MCF 10A (cell line): ENCODE measurements at regions of chr9 and their contacts with region 1.

Region 1: DNA sequence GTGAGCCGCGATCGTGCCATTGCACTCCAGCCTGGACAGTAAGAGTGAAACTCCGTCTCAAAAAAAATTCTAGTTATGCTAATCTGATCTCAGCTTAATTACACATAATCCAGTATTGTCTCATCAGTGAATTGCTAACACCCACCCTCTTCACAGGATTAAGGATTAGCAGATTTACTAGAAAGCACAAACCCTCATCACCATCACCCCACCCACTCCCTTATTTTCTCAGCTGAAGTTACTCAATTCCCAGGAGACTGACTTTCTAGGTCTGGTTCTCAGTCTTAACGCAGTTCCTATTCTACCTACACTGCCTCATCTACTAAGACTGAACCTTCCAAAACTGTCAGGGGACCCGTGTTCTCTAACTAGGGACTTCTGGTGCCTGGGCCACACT is 9.0 kb downstream of the TOR1B start:
- DNase-seq: no peak
- H3K4me3 Mint-ChIP-seq: no peak overlapping the region
- H3K27ac Mint-ChIP-seq: no peak overlapping the region
- H3K4me1 Mint-ChIP-seq: no peaks in the 10 kb centered on the region
- H3K27me3 Mint-ChIP-seq: no peaks in the 10 kb centered on the region
- CTCF ChIP-seq: no peak

Region 2: GRCh38 chr9:129481824-129482511 is 330.0 kb before region 1 on chr9:
- CTCF ChIA-PET with region 1: no interaction called
- POLR2A ChIA-PET with region 1: no interaction called
- intact Hi-C with region 1: no loop called
- DNase-seq: peak; percentile 38
- H3K4me3 Mint-ChIP-seq: peak overlapping the region; percentile 70
- H3K27ac Mint-ChIP-seq: peak overlapping the region; percentile 93
- H3K4me1 Mint-ChIP-seq: peaks cover 39% of the 10 kb centered on the region
- H3K27me3 Mint-ChIP-seq: no peaks in the 10 kb centered on the region
- CTCF ChIP-seq: peak; percentile 13

Region 3: GRCh38 chr9:129823935-129824601 is 12.1 kb after region 1 on chr9 and contains the start of gene TOR1A:
- CTCF ChIA-PET with region 1: no interaction called
- POLR2A ChIA-PET with region 1: interaction called, 16 read pairs
- intact Hi-C with region 1: no loop called
- DNase-seq: peak; percentile 94
- H3K4me3 Mint-ChIP-seq: peak within 1 kb of the TSS; percentile 76
- H3K27ac Mint-ChIP-seq: peak within 1 kb of the TSS; percentile 77
- H3K4me1 Mint-ChIP-seq: no peaks in the 10 kb centered on the region
- H3K27me3 Mint-ChIP-seq: no peaks in the 10 kb centered on the region
- CTCF ChIP-seq: no peak
- total RNA-seq, gene TOR1A: 33.6 and 40.4 TPM in 2 replicates